Left cardiac atrium (tissue), 4 donors: ENCODE measurements at regions of chr1 and their contacts with region 1.

Region 1: DNA sequence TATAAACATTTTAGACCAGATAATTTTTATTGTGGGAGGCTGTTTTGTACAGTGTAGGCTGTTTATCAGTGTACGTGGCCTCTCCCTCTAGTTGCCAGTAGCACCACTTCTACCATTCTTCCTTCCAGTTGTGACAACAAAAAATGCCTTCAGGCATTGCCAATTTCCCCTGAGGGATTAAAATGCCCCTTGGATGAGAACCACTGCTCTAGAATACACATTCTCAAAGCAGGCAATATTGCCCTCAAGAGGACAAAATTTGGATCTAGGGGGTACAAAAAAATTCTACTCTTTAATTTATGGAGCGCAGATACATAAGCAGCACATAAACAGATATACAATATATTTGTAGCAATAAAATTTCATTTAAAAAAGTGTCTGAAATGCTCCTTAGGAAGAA is 674.6 kb downstream of the PTPRC start:
- DNase-seq: no peak
- ATAC-seq: no peak

Region 2: DNA sequence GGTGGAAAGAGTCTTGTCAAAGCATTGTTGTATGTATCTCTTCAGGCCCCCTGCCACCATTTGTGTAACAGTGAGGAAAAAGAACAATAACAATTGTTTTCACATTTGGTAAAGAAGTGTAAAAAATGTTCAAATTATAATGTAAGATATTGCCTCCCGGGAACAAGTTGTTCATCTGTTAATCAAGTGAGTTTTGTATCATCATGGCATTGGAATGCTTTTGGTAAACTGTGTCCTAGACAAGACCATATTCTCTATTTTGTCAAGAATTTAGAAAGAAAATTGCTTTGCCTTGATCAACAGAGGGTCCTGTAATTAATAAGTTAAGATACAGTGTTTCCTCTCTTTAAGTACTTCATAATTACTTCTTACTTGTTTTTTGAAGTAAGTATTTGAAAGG is 22.1 kb after region 1 on chr1:
- intact Hi-C with region 1: loop called in 1 of 2 experiments (anchors 2 kb)
- DNase-seq: no peak
- ATAC-seq: no peak

Region 3: DNA sequence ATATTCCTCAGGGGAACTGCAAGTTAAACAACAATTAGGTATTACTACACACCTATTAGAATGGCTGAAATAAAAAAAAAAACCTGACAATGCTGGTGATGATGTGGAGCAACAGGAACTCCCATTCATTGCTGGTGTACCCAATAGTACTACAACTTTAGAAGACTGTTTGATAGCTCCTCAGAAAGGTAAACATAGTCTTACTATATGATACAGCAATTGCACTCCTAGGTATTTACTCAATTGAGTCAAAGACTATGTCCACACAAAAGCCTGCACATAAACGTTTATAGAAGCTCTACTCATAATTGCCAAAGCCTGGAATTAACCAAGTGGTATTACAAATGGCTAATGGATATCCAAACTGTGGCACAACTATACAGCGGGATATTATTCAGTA is 189.4 kb after region 1 on chr1:
- intact Hi-C with region 1: no loop called
- DNase-seq: no peak
- ATAC-seq: no peak